Brain microvascular endothelial cell (primary cell): ENCODE measurements at regions of chr3 and their contacts with region 1.

Region 1: GRCh38 chr3:132006605-132007204 is 28.1 kb downstream of the CPNE4 start:
- DNase-seq: peak; percentile 23
- H3K4me3 ChIP-seq: no peak overlapping the region
- H3K27ac ChIP-seq: no peak overlapping the region
- H3K27me3 ChIP-seq: no peaks in the 10 kb centered on the region
- CTCF ChIP-seq: peak; percentile 70

Region 2: DNA sequence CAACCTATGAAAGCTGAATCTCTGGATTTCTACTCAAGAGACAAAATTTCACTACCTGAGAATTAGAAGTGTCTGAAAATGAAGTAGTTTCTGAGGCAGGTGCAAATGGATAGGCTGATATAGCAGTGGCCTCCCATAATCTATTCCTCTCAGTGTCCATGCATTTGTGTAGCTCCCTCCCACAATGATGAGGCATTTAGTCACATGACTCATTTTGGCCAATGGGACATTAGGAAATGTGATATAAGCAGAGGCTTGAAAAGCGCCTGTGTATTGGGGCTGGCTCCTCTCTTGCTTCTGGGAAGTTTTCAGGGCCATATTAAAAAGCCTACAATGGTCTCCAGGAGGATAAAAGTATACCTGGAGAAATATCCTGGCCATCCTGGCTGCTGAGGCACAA is 424.3 kb before region 1 on chr3:
- in situ Hi-C with region 1: no loop called
- DNase-seq: no peak
- H3K4me3 ChIP-seq: no peak overlapping the region
- H3K27ac ChIP-seq: no peak overlapping the region
- H3K27me3 ChIP-seq: no peaks in the 10 kb centered on the region
- CTCF ChIP-seq: no peak

Region 3: DNA sequence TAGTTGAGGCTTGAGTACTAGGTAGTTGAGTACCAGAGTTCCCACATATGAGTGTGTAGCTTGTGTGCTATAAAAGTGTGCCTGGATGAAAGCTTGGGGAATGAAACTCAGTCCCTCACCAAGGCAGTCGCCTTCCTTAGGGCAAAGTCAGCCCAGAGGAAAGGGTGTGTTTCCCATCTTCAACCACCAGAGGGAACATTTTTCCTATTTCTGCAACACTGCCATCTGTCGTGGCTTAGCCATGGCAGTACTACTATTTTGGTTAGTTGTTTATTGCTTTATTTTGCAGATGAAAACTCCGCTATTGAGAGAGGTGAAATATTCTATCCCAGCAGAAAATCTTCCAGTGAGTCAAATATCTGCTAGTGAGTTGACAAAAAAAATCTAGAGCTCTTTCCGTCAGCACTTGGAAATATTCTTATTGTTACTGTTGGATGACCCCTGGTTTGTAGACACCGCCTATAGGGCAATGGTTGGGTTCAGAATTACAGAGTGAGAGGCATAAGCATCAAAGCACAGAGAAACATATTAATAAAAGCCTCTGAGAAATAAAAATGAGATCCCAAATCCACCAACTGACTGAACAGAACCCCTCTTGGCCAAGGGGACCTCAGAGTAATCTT is 211.8 kb before region 1 on chr3:
- in situ Hi-C with region 1: loop called (anchors 25 kb)
- DNase-seq: peak; percentile 54
- H3K4me3 ChIP-seq: no peak overlapping the region
- H3K27ac ChIP-seq: no peak overlapping the region
- H3K27me3 ChIP-seq: no peaks in the 10 kb centered on the region
- CTCF ChIP-seq: peak; percentile 90

Region 4: GRCh38 chr3:132435911-132436425 is 429.3 kb after region 1 on chr3:
- in situ Hi-C with region 1: no loop called
- DNase-seq: no peak
- H3K4me3 ChIP-seq: no peak overlapping the region
- H3K27ac ChIP-seq: no peak overlapping the region
- H3K27me3 ChIP-seq: no peaks in the 10 kb centered on the region
- CTCF ChIP-seq: no peak